ENCODE measurements at regions of chr5 and their contacts with region 1.

Region 1: GRCh38 chr5:179495906-179496455 is 54.4 kb upstream of the RUFY1 start:
- DNase-seq: no peak
- ATAC-seq: no peak
- H3K4me3 ChIP-seq: no peak overlapping the region
- H3K27ac ChIP-seq: no peak overlapping the region
- H3K4me1 ChIP-seq: no peaks in the 10 kb centered on the region
- H3K27me3 ChIP-seq: no peaks in the 10 kb centered on the region
- CTCF ChIP-seq: peak in 1 of 3 experiments; percentile 33; a peak in 1 of 6 replicates
- POLR2A ChIP-seq: no peak
- RAD21 ChIP-seq: peak; percentile 62

Region 2: DNA sequence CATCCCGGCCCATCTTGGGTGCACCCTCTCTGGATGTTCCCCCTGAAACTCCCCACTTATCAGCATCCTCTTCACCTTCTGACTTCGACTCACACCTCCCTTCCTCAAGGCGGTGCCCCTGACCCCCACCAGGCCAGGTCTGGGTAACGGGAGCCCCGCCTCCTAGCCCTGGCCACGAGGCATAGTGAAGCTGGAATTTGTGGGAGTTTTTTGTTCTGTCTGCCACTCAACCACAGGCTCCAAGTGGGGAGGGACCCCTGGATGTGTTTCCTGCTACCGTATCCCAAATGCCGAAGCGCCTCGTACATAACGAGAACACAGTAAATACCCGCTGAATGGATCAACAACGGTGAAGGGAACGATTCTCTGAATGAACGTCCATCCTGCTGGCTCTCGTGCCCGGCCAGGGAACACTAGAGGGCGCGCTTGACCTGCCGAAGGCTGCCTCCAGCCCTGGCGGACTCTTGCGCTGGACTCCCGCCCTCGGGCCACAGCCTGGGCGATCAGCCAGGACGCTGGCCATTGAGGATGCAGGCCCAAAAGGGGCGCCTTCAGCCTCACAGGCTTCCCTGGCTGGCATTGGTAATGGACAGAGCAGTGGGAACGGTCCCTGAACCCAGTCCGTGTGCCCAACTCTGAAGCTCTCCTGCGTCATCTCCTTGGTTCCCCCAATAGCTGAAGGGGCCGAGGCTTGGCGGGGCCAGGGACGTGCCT is 1216.1 kb before region 1 on chr5:
- CTCF ChIA-PET with region 1: no interaction called
- POLR2A ChIA-PET with region 1: no interaction called
- RAD21 ChIA-PET with region 1: no interaction called
- intact Hi-C with region 1: loop called (anchors 1 kb)
- DNase-seq: peak; percentile 49
- ATAC-seq: peak; percentile 97
- H3K4me3 ChIP-seq: no peak overlapping the region
- H3K27ac ChIP-seq: no peak overlapping the region
- H3K4me1 ChIP-seq: peaks cover 0 to 4% of the 10 kb centered on the region in 2 experiments; a peak in 2 of 4 replicates
- H3K27me3 ChIP-seq: no peaks in the 10 kb centered on the region
- CTCF ChIP-seq: peak; percentile 87 to 97 (median 95)
- POLR2A ChIP-seq: no peak
- RAD21 ChIP-seq: peak; percentile 98

Region 3: DNA sequence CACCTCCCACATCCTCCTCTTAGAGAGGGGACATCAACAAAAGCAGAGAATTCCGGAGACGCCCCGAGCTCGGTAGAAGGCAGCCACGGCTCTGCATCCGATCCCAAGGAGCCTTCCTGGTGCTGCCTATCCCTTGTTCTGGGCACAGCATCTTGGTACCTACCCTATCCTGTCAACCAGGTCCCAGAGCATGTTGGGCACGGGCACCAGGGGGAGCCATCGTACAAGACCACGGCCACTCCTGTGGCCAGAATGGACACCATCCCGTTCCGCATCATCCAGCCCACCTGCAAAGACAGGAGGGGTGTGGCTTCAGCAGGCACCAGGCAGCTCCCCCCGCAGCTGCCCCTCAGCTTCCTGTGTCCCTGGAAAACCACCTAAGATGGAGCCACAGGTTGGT is 702.8 kb before region 1 on chr5:
- CTCF ChIA-PET with region 1: no interaction called
- POLR2A ChIA-PET with region 1: no interaction called
- RAD21 ChIA-PET with region 1: no interaction called
- intact Hi-C with region 1: loop called (anchors 2 kb)
- DNase-seq: peak; percentile 16
- ATAC-seq: peak; percentile 93
- H3K4me3 ChIP-seq: no peak overlapping the region
- H3K27ac ChIP-seq: no peak overlapping the region
- H3K4me1 ChIP-seq: peaks cover 0 to under 1% of the 10 kb centered on the region in 2 experiments; a peak in 1 of 4 replicates
- H3K27me3 ChIP-seq: no peaks in the 10 kb centered on the region
- CTCF ChIP-seq: peak; percentile 48 to 72 (median 69); a peak in 5 of 6 replicates
- POLR2A ChIP-seq: no peak
- RAD21 ChIP-seq: peak; percentile 72

Region 4: DNA sequence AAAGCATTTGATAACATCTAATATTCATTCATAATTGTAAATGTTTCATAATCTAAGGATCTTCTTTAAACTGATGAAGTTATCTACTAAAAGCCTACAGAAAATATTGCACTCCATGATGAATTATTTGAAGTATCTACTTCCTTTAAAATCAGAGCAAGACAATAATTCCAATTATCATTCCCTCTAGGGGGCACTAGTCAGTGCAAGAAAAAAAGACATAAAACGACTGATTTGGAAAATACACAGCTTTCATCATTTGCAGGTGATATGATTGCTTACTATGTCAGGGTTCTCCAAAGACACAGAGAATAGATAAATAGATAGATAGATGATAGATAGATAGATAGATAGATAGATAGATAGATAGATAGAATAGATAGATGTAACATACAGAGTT is 487.3 kb before region 1 on chr5:
- CTCF ChIA-PET with region 1: no interaction called
- POLR2A ChIA-PET with region 1: no interaction called
- RAD21 ChIA-PET with region 1: no interaction called
- intact Hi-C with region 1: loop called (anchors 5 kb)
- DNase-seq: no peak
- ATAC-seq: no peak
- H3K4me3 ChIP-seq: no peak overlapping the region
- H3K27ac ChIP-seq: no peak overlapping the region
- H3K4me1 ChIP-seq: no peaks in the 10 kb centered on the region
- H3K27me3 ChIP-seq: no peaks in the 10 kb centered on the region
- CTCF ChIP-seq: peak in 2 of 3 experiments; percentile 24 to 38; a peak in 3 of 6 replicates
- POLR2A ChIP-seq: no peak
- RAD21 ChIP-seq: peak; percentile 29; the same call in 1 of the 2 replicates

Region 5: GRCh38 chr5:179166886-179167841 is 328.8 kb before region 1 on chr5:
- CTCF ChIA-PET with region 1: interaction called, 20 read pairs
- POLR2A ChIA-PET with region 1: no interaction called
- RAD21 ChIA-PET with region 1: interaction called, 4 to 6 read pairs
- intact Hi-C with region 1: loop called (anchors 1 kb)
- DNase-seq: no peak
- ATAC-seq: peak; percentile 96
- H3K4me3 ChIP-seq: no peak overlapping the region
- H3K27ac ChIP-seq: no peak overlapping the region
- H3K4me1 ChIP-seq: peaks cover 0 to 3% of the 10 kb centered on the region in 2 experiments; a peak in 1 of 4 replicates
- H3K27me3 ChIP-seq: no peaks in the 10 kb centered on the region
- CTCF ChIP-seq: peak; percentile 73 to 90 (median 83)
- POLR2A ChIP-seq: no peak
- RAD21 ChIP-seq: peak; percentile 79